ENCODE measurements at regions of chr5 and their contacts with region 1.

Region 1: GRCh38 chr5:41433552-41434181 is 76.7 kb downstream of the PLCXD3 start:
- DNase-seq: peak in 1 of 2 experiments; percentile 47
- H3K4me3 ChIP-seq: no peak overlapping the region; a peak in 1 of 8 replicates
- H3K27ac ChIP-seq: no peak overlapping the region
- H3K4me1 ChIP-seq: peaks cover 0 to 3% (median 0%) of the 10 kb centered on the region in 4 experiments; a peak in 1 of 7 replicates
- H3K27me3 ChIP-seq: no peaks in the 10 kb centered on the region
- CTCF ChIP-seq: peak; percentile 29 to 78 (median 43)
- EP300 ChIP-seq: no peak
- POLR2A ChIP-seq: no peak
- RAD21 ChIP-seq: peak; percentile 29 to 42; a peak in 3 of 4 replicates

Region 2: DNA sequence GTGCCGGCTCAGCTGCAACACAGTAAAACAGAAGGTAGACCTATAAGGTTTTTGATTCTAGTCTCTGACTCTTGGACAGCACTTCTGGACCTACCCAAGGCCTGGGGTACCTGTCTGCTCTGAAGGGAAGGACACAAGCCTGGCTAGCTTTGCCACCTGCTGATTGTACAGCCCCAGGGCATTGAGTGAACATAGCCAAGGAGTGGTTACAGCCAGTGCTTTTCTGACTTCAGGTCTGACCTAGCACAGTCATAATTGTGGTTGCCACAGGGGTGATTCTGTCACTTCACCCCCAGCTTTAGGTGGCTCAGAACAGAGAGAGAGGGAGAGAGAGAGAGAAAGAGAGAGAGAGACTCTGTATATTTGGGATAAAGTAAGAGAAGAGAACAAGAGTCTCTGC is 41.7 kb before region 1 on chr5:
- CTCF ChIA-PET with region 1: no interaction called
- POLR2A ChIA-PET with region 1: no interaction called
- DNase-seq: no peak
- H3K4me3 ChIP-seq: no peak overlapping the region
- H3K27ac ChIP-seq: no peak overlapping the region
- H3K4me1 ChIP-seq: no peaks in the 10 kb centered on the region
- H3K27me3 ChIP-seq: no peaks in the 10 kb centered on the region
- CTCF ChIP-seq: no peak
- EP300 ChIP-seq: no peak
- POLR2A ChIP-seq: no peak
- RAD21 ChIP-seq: no peak

Region 3: GRCh38 chr5:41404757-41405156 is 28.9 kb before region 1 on chr5:
- CTCF ChIA-PET with region 1: interaction called, 12 read pairs
- POLR2A ChIA-PET with region 1: no interaction called
- DNase-seq: no peak
- H3K4me3 ChIP-seq: no peak overlapping the region
- H3K27ac ChIP-seq: no peak overlapping the region
- H3K4me1 ChIP-seq: no peaks in the 10 kb centered on the region
- H3K27me3 ChIP-seq: no peaks in the 10 kb centered on the region
- CTCF ChIP-seq: no peak
- EP300 ChIP-seq: no peak
- POLR2A ChIP-seq: no peak
- RAD21 ChIP-seq: no peak

Region 4: GRCh38 chr5:41445932-41446563 is 12.4 kb after region 1 on chr5:
- CTCF ChIA-PET with region 1: interaction called, 19 read pairs
- POLR2A ChIA-PET with region 1: no interaction called
- DNase-seq: no peak
- H3K4me3 ChIP-seq: no peak overlapping the region
- H3K27ac ChIP-seq: no peak overlapping the region
- H3K4me1 ChIP-seq: no peaks in the 10 kb centered on the region
- H3K27me3 ChIP-seq: no peaks in the 10 kb centered on the region
- CTCF ChIP-seq: no peak
- EP300 ChIP-seq: no peak
- POLR2A ChIP-seq: no peak
- RAD21 ChIP-seq: no peak

Region 5: DNA sequence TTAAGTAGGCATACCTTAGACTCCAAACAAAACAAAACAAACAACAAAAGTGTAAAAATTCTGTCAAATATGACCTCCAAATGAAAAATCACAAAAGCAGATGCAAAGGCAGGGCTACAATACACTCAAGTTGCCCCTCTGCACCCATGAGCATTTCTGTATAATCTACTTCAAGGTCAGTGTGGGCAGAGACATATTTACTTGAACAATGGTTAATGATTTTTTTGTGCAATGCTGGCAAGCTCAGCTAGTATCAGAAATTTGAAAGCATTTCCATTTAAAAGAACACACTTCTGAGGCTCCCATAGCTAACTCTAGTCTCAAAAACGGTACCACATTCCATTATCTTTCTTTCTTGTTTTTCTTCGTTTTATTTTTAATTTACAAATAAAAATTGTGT is 18.8 kb after region 1 on chr5:
- CTCF ChIA-PET with region 1: interaction called, 19 read pairs
- POLR2A ChIA-PET with region 1: no interaction called
- DNase-seq: no peak
- H3K4me3 ChIP-seq: no peak overlapping the region
- H3K27ac ChIP-seq: no peak overlapping the region
- H3K4me1 ChIP-seq: no peaks in the 10 kb centered on the region
- H3K27me3 ChIP-seq: no peaks in the 10 kb centered on the region
- CTCF ChIP-seq: no peak
- EP300 ChIP-seq: no peak
- POLR2A ChIP-seq: no peak
- RAD21 ChIP-seq: no peak